Breast epithelium (tissue), 4 donors: ENCODE measurements at regions of chr1 and their contacts with region 1.

Region 1: DNA sequence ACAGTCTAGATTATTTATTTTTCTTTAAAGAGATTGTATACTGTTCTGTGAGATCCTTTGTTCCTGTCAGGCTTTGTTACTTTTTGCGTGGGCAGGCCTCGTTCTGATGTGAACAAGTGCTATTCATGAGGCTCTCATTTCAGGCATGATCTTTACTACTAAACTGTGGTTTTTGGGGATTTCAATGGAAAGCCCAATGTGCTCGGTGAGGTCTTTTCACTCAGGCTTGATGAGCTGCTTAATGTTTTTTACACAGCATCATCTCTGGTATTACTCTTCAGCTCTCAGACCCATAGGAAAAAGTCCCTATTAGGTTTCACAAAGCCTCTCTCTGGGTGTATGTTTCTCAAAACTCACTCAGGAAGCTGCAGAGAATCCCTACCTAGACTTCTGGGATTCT is 419.4 kb downstream of the GPATCH2 start:
- DNase-seq: no peak
- H3K4me3 ChIP-seq: no peak overlapping the region
- H3K27ac ChIP-seq: no peak overlapping the region
- H3K4me1 ChIP-seq: no peaks in the 10 kb centered on the region
- H3K27me3 ChIP-seq: no peaks in the 10 kb centered on the region
- CTCF ChIP-seq: no peak
- POLR2A ChIP-seq: no peak

Region 2: DNA sequence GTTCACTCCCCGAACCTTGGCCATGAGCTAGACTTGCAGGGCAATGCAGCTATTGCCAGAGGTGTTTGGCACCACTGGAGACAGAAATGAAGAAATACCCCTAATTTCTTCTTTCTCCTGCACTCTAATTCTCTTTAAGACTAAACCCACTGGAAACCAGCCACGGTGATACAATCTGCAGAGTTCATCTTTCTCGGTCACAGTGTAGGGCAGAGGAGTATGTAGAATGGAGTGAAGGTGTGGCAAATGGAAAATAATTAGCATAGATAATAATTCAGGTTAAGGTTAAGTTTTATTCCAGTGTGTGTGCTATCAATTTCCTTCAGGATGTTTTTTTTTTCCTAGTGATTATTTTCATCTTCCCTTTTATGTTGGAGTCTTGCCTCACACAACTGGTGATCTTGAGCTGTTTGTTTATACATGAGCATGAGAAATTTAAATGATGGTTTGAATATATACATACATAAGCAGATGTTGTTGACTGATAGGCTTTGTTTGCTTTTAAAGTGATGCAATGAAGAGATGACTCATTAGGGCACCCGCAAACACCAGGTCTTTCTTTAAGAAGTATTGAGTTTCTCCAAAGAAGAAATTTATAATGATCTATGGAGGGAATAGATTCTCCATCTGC is 501.6 kb after region 1 on chr1:
- intact Hi-C with region 1: no loop called
- DNase-seq: no peak
- H3K4me3 ChIP-seq: no peak overlapping the region
- H3K27ac ChIP-seq: no peak overlapping the region
- H3K4me1 ChIP-seq: no peaks in the 10 kb centered on the region
- H3K27me3 ChIP-seq: no peaks in the 10 kb centered on the region
- CTCF ChIP-seq: no peak
- POLR2A ChIP-seq: no peak

Region 3: GRCh38 chr1:218090459-218090858 is 879.0 kb after region 1 on chr1:
- intact Hi-C with region 1: loop called (anchors 5 kb)
- DNase-seq: no peak
- H3K4me3 ChIP-seq: no peak overlapping the region
- H3K27ac ChIP-seq: no peak overlapping the region
- H3K4me1 ChIP-seq: no peaks in the 10 kb centered on the region
- H3K27me3 ChIP-seq: no peaks in the 10 kb centered on the region
- CTCF ChIP-seq: no peak
- POLR2A ChIP-seq: no peak